HepG2 (cell line): ENCODE measurements at regions of chr6 and their contacts with region 1.

Region 1: DNA sequence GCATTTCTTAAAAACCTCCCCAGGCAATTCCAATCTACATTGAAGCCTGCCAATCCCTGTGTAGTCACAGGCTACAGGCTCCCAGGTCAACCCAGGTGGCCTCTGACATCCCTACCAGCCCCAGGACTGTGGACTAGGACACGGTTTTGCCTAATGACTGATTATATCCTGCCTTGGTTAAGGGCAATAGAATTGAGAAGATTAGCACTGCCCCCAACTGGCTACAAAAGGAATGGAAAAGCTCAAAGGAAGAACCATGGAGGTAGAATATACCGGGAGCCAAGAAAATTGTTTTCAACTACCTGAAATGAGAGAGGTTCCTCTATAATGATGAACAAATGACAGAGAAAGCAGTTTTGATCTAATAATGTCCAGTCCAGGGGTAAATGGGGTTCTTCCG is 421.1 kb upstream of the AGPAT4 start:
- DNase-seq: peak; percentile 13
- ATAC-seq: peak; percentile 82
- H3K4me3 ChIP-seq: no peak overlapping the region
- H3K27ac ChIP-seq: no peak overlapping the region
- H3K4me1 ChIP-seq: no peaks in the 10 kb centered on the region
- H3K27me3 ChIP-seq: no peaks in the 10 kb centered on the region
- CTCF ChIP-seq: peak; percentile 61
- EP300 ChIP-seq: no peak
- POLR2A ChIP-seq: no peak
- RAD21 ChIP-seq: 0 out of 2 replicates have a peak, but pooled peaks have one; percentile 17

Region 2: DNA sequence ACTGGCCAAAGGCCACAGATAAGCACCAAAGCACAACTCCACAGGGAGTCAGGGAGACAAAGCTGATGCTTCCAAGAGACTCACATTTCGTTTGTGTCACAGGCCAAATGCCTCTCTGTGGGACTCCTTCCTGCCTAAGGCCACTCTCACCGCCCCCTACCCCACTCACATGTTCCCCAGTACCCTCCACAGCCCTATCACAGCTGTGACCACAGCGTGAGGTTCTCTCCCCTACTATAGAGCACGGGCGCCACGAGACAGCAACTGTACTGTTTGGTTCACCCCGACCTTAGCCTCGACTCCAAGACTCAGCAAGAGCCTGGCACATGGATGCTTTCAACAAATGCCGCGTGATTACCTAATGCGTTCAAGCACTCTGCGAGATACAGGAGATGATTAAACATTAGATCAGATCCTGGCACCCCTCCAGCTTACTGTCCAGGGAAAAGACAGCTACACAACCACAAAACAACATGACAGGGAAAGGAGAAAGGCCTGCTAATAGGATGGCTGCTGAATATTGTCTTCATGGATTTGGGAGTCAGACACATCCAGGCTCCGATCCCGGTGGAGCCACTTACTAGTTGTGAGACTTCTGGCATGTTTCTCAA is 526.6 kb before region 1 on chr6:
- CTCF ChIA-PET with region 1: no interaction called
- POLR2A ChIA-PET with region 1: no interaction called
- in situ Hi-C with region 1: no loop called
- intact Hi-C with region 1: no loop called
- DNase-seq: no peak
- ATAC-seq: no peak; the same call in 2 of the 3 replicates
- H3K4me3 ChIP-seq: no peak overlapping the region
- H3K27ac ChIP-seq: no peak overlapping the region
- H3K4me1 ChIP-seq: no peaks in the 10 kb centered on the region
- H3K27me3 ChIP-seq: peaks cover 0 to 24% of the 10 kb centered on the region in 2 experiments; a peak in 3 of 5 replicates
- CTCF ChIP-seq: no peak
- EP300 ChIP-seq: no peak
- POLR2A ChIP-seq: no peak
- RAD21 ChIP-seq: no peak

Region 3: DNA sequence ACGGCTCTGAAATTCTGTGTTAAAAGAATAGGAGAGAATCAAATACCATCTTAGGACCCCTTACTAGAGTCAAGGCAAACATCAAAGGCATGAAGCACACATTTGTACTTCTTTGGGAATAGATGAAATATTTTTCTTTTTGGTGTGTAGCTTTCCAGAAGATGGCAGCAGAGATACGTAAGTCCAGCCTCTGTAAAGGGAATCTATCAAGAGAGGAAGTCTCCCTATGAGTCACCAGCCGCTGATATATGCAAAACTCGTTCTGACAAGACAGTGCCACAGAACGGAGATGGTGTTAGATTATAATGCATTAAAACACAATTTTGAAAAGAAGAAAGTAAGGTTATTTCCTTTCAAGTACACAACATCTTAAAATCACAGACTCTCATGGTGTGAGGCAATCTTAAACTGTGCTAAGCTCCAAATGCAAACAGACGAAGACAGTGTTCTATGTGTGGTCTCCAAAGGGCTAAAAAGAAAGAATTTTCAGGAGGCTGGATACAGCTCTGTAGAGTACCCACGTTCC is 301.1 kb before region 1 on chr6:
- CTCF ChIA-PET with region 1: interaction called, 11 read pairs
- POLR2A ChIA-PET with region 1: no interaction called
- in situ Hi-C with region 1: no loop called
- intact Hi-C with region 1: no loop called
- DNase-seq: peak; percentile 71
- ATAC-seq: peak; percentile 97
- H3K4me3 ChIP-seq: no peak overlapping the region
- H3K27ac ChIP-seq: no peak overlapping the region
- H3K4me1 ChIP-seq: no peaks in the 10 kb centered on the region
- H3K27me3 ChIP-seq: no peaks in the 10 kb centered on the region; a peak in 2 of 5 replicates
- CTCF ChIP-seq: peak; percentile 76
- EP300 ChIP-seq: no peak
- POLR2A ChIP-seq: no peak
- RAD21 ChIP-seq: peak; percentile 60; the same call in 1 of the 2 replicates

Region 4: DNA sequence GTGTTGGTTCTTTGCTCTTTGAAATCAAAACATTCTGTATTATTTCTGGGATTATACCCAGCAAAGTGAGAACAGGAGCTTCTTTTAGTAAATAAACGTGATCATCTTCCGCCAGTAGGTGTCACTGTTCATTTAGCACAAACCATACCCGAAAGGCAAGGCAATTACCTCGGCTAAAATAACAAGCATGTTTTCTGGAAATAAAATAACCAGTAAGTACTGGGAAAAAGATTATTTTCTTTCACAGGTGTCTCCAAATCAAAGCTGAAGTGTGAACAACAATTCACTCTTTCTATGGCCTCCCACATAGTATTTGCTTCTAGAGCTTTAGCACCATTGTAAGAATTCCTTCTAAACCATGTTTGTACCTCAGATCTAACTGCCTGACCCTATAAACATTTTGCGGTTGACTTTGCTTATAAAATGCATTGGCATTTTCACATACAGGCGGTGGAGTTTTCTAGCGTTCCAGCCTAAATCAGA is 276.5 kb before region 1 on chr6:
- CTCF ChIA-PET with region 1: interaction called, 4 read pairs
- POLR2A ChIA-PET with region 1: no interaction called
- in situ Hi-C with region 1: no loop called
- intact Hi-C with region 1: loop called (anchors 1 kb)
- DNase-seq: peak; percentile 56
- ATAC-seq: peak; percentile 82
- H3K4me3 ChIP-seq: no peak overlapping the region
- H3K27ac ChIP-seq: no peak overlapping the region
- H3K4me1 ChIP-seq: no peaks in the 10 kb centered on the region
- H3K27me3 ChIP-seq: peaks cover 0 to 36% of the 10 kb centered on the region in 2 experiments; a peak in 3 of 5 replicates
- CTCF ChIP-seq: peak; percentile 74
- EP300 ChIP-seq: no peak
- POLR2A ChIP-seq: no peak
- RAD21 ChIP-seq: peak; percentile 50

Region 5: GRCh38 chr6:161598896-161599295 is 96.1 kb before region 1 on chr6:
- CTCF ChIA-PET with region 1: no interaction called
- POLR2A ChIA-PET with region 1: no interaction called
- in situ Hi-C with region 1: no loop called
- intact Hi-C with region 1: no loop called
- DNase-seq: no peak
- ATAC-seq: no peak
- H3K4me3 ChIP-seq: no peak overlapping the region
- H3K27ac ChIP-seq: no peak overlapping the region
- H3K4me1 ChIP-seq: no peaks in the 10 kb centered on the region
- H3K27me3 ChIP-seq: no peaks in the 10 kb centered on the region; a peak in 1 of 5 replicates
- CTCF ChIP-seq: no peak
- EP300 ChIP-seq: no peak
- POLR2A ChIP-seq: no peak
- RAD21 ChIP-seq: no peak

Region 6: GRCh38 chr6:161618831-161619454 is 76.1 kb before region 1 on chr6:
- CTCF ChIA-PET with region 1: no interaction called
- POLR2A ChIA-PET with region 1: no interaction called
- in situ Hi-C with region 1: no loop called
- intact Hi-C with region 1: loop called (anchors 2 kb)
- DNase-seq: peak; percentile 49
- ATAC-seq: peak; percentile 93
- H3K4me3 ChIP-seq: no peak overlapping the region
- H3K27ac ChIP-seq: no peak overlapping the region
- H3K4me1 ChIP-seq: no peaks in the 10 kb centered on the region
- H3K27me3 ChIP-seq: no peaks in the 10 kb centered on the region
- CTCF ChIP-seq: peak; percentile 59
- EP300 ChIP-seq: no peak
- POLR2A ChIP-seq: no peak
- RAD21 ChIP-seq: no peak

Region 7: GRCh38 chr6:161684731-161685475 is 10.1 kb before region 1 on chr6:
- CTCF ChIA-PET with region 1: no interaction called
- POLR2A ChIA-PET with region 1: no interaction called
- in situ Hi-C with region 1: no loop called
- intact Hi-C with region 1: no loop called
- DNase-seq: no peak
- ATAC-seq: no peak
- H3K4me3 ChIP-seq: no peak overlapping the region
- H3K27ac ChIP-seq: no peak overlapping the region
- H3K4me1 ChIP-seq: no peaks in the 10 kb centered on the region
- H3K27me3 ChIP-seq: no peaks in the 10 kb centered on the region
- CTCF ChIP-seq: no peak
- EP300 ChIP-seq: no peak
- POLR2A ChIP-seq: no peak
- RAD21 ChIP-seq: no peak